HEK293 (cell line): ENCODE measurements at regions of chr7 and their contacts with region 1.

Region 1: DNA sequence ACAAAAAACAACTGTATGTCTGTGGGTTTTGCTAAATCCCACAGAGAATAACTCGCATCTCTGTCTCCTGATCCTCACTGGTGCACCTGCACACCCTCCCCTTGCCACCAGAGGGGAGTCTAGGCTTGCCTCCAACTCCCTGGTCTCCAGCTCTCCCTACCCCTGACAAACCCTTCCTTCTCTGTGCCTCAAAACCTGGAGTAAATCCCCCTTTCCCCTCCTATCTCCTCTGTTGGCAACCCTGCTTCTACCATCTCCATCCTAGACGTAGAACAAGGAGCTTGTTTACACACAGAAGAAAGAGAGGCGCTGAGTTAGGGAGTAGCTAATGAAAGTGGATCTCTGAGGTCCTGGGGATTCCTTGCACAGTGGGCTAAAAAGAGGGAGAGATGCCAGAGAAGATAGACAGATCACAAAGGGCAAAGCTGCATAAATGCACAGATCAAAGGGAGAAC is 6.0 kb downstream of the MBLAC1 start:
- H3K4me3 ChIP-seq: no peak overlapping the region
- H3K27ac ChIP-seq: no peak overlapping the region
- H3K4me1 ChIP-seq: no peaks in the 10 kb centered on the region
- CTCF ChIP-seq: peak; percentile 94

Region 2: DNA sequence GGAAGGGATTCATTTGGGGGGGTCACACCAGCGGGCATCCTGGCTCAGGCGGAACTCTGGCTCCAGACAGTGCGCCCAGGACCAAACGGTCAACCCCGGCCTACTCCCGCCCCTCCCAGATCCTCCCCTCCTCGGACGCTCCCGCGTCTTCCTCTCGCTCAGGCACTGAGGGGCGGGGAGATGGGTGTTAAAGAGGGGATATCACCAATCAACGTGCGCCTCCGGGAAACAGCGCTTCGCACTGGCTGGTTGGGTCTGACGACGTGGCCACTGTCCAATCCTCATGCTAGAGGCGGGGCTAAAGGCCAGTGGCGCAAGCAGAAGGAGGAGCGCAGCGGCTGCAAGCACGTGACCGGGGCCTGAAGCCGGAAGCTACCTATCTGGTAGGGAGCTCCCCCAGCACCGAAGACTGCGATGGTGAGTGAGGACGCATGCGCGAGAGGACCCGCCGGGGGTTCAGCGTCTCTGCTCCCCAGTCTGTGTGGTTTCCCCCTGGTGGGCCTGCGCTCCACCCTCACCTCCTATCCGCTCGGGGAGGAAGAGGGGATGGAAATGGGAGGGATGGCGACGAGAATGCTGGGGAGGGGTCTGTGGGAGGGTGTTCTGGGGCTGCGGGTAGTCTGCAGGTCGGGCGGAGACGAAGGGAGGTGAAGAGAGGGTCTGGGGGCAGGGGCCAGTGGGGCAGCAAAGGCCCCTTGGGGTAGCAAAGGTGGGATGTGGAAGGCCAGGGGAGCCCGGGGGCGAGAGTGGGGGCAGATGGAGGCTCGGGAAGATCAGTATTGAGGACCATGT is 16.0 kb after region 1 on chr7 and contains the start of gene LAMTOR4:
- CTCF ChIA-PET with region 1: interaction called, 12 read pairs
- POLR2A ChIA-PET with region 1: interaction called, 8 read pairs
- H3K4me3 ChIP-seq: peak within 1 kb of the TSS; percentile 74
- H3K27ac ChIP-seq: peak within 1 kb of the TSS; percentile 68
- H3K4me1 ChIP-seq: peaks cover 10% of the 10 kb centered on the region
- CTCF ChIP-seq: no peak; the same call in 1 of the 2 replicates

Region 3: GRCh38 chr7:100190048-100190711 is 57.5 kb after region 1 on chr7:
- CTCF ChIA-PET with region 1: interaction called, 12 read pairs
- POLR2A ChIA-PET with region 1: interaction called, 4 read pairs
- H3K4me3 ChIP-seq: no peak overlapping the region
- H3K27ac ChIP-seq: no peak overlapping the region
- H3K4me1 ChIP-seq: no peaks in the 10 kb centered on the region
- CTCF ChIP-seq: no peak

Region 4: DNA sequence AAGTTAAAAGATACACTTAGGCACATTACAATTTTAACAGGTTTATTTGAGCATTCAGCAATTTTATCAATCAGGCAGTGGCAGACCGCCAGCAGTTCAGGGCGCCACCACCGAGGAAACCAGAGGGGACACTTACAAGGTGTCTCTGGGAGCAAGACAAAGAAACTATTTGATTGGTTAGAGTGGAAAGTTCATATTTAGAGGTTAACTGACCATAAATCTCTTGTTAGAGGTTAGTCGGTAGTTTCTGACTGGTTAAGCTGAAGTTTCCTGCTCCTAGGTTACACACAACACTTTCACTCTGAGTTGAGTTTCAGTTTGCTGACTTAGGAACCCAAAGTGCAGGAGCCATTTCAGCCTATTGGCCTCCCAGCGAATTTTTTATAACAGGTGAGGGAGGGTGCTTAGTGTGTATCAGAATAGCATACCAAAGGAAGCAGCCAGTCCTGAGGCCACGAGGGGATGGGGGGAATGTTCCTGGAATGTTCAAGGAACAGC is 76.2 kb after region 1 on chr7:
- CTCF ChIA-PET with region 1: interaction called, 55 read pairs
- POLR2A ChIA-PET with region 1: no interaction called
- H3K4me3 ChIP-seq: no peak overlapping the region
- H3K27ac ChIP-seq: no peak overlapping the region
- H3K4me1 ChIP-seq: no peaks in the 10 kb centered on the region
- CTCF ChIP-seq: no peak

Region 5: DNA sequence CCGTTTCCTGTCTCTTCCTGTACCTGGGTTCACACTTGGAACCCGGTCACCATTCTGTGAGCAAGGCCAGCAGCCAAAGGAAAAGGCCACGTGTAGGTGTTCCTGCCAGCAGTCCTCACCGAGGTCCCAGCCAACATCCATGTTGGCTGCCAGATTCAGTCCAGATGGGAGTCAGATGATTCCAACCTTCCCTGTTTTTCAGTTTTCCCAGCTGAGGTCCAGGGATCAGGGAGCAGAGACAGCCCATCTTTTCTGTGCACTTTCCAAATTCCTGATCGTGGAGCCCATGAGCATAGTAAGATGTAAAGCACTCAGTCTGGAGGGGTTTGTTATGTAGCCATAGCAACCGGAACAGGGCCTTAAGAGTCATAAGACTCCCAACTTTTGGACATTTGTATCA is 83.2 kb after region 1 on chr7:
- CTCF ChIA-PET with region 1: interaction called, 119 read pairs
- POLR2A ChIA-PET with region 1: interaction called, 7 read pairs
- H3K4me3 ChIP-seq: no peak overlapping the region
- H3K27ac ChIP-seq: no peak overlapping the region
- H3K4me1 ChIP-seq: no peaks in the 10 kb centered on the region
- CTCF ChIP-seq: no peak

Region 6: DNA sequence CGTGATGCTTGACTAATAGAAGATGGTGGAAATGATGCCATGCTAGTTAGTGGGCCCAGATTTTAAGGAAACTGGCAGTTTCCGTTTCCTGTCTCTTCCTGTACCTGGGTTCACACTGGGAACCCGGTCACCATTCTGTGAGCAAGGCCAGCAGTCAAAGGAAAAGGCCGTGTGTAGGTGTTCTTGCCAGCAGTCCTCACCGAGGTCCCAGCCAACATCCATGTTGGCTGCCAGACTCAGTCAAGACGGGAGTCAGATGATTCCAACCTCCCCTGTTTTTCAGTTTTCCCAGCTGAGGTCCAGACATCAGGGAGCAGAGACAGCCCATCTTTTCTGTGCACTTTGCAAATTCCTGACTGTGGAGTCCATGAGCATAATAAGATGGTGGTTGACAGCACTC is 210.0 kb after region 1 on chr7:
- CTCF ChIA-PET with region 1: interaction called, 26 read pairs
- POLR2A ChIA-PET with region 1: no interaction called
- H3K4me3 ChIP-seq: no peak overlapping the region
- H3K27ac ChIP-seq: no peak overlapping the region
- H3K4me1 ChIP-seq: 0 out of 2 replicates have a peak, but pooled peaks cover 3% of the 10 kb centered on the region
- CTCF ChIP-seq: no peak